ENCODE measurements at regions of chr12 and their contacts with region 1.

Region 1: DNA sequence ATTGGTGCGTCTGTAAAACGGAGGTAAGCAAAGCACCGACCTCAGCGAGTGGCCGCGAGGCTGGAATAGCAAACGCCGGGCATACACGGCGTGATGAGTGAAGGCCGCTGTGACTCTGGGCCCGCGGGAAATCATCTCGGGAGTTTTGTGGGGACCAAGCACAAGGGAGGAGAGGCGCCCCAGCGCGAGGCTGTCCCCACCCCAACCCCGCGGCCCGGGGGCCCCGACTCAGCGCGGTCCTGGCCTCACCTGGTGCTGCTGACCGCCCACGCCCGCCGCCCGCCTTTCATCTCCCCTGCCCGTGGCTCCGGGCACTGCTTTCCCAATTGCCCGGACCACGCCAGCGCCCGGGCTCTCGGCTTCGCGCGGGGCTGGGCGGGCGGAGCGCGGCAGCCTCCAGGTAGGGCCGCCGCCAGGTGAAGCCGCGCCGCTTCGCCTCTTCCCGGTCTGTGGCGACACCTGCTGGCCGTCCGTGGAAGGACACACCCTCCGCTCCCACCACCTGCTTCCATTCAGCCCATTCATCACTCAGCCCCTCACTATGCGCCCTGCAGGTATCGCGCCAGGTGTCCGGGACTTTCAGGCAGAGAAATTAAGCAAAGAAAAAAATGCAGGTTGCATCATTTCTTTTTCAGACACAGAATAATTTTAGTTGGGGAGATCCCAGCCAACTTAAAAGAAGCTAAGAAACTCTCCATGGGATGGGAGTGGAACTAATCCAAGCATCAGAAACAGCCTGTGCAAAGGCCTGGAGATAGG is 360.4 kb downstream of the MED13L start:
- DNase-seq: peak; percentile 54 to 75
- ATAC-seq: peak; percentile 80 to 91 (median 88)
- H3K4me3 ChIP-seq: peak overlapping the region; percentile 44
- H3K27ac ChIP-seq: no peak overlapping the region
- H3K4me1 ChIP-seq: no peaks in the 10 kb centered on the region
- H3K27me3 ChIP-seq: peaks cover 0 to 13% (median 3%) of the 10 kb centered on the region in 3 donors
- CTCF ChIP-seq: peak; percentile 99

Region 2: DNA sequence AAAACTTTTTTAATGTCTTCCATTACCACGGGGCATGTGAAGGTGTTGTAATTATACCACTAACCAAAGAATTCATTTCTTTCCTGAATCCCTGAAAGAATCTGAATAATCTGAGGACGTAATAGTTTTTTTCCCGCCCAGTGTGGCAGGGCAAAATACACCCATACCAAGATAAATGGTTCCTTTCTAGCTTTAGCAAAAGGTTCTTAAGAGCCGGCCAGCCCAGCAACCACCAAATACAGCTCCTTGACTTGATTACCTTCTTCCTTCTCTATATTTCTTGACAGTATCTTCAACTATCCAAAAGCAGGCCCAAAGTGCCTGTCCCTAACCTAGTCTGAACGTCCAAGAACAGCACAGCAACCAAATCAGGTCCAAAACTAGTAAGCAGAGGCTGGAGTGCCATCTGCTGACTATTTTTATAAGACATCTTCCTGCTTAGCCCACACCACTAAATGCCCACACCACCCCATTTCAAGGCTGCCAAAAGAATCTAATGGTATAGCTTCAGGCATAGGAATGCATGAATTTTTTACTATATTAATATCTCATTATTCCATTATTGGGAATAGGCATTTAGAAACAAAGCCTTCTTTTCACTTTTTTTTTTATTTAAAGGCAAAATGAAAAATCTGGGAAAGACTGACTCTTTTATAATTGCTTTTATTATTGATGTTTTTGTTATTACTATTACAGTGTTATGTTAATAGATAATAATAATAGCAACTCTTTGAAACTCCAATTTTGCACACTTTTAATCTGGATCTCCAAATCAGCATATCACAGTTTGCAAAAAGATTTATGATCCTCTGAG is 164.0 kb before region 1 on chr12:
- intact Hi-C with region 1: loop called in 1 of 2 experiments (anchors 2 kb)
- DNase-seq: no peak
- ATAC-seq: peak; percentile 73 to 95 (median 84)
- H3K4me3 ChIP-seq: no peak overlapping the region
- H3K27ac ChIP-seq: no peak overlapping the region
- H3K4me1 ChIP-seq: no peaks in the 10 kb centered on the region
- H3K27me3 ChIP-seq: peaks cover 0 to 23% (median 6%) of the 10 kb centered on the region in 3 donors
- CTCF ChIP-seq: peak; percentile 71

Region 3: GRCh38 chr12:115794659-115795081 is 122.4 kb before region 1 on chr12:
- intact Hi-C with region 1: loop called (anchors 1 to 2 kb)
- DNase-seq: no peak
- ATAC-seq: peak in 2 of 4 donors; percentile 47 to 67
- H3K4me3 ChIP-seq: no peak overlapping the region
- H3K27ac ChIP-seq: no peak overlapping the region
- H3K4me1 ChIP-seq: peaks cover 7% of the 10 kb centered on the region
- H3K27me3 ChIP-seq: no peaks in the 10 kb centered on the region
- CTCF ChIP-seq: peak; percentile 18

Measured in psoas muscle (tissue), 8 donors.